Mammary epithelial cell (primary cell): ENCODE measurements at regions of chr9 and their contacts with region 1.

Region 1: GRCh38 chr9:69444021-69444420 is 119.0 kb downstream of the ENTREP1 start:
- DNase-seq: peak; percentile 23
- H3K4me3 ChIP-seq: no peak overlapping the region
- H3K27ac ChIP-seq: no peak overlapping the region
- H3K4me1 ChIP-seq: no peaks in the 10 kb centered on the region
- H3K27me3 ChIP-seq: no peaks in the 10 kb centered on the region
- CTCF ChIP-seq: no peak

Region 2: DNA sequence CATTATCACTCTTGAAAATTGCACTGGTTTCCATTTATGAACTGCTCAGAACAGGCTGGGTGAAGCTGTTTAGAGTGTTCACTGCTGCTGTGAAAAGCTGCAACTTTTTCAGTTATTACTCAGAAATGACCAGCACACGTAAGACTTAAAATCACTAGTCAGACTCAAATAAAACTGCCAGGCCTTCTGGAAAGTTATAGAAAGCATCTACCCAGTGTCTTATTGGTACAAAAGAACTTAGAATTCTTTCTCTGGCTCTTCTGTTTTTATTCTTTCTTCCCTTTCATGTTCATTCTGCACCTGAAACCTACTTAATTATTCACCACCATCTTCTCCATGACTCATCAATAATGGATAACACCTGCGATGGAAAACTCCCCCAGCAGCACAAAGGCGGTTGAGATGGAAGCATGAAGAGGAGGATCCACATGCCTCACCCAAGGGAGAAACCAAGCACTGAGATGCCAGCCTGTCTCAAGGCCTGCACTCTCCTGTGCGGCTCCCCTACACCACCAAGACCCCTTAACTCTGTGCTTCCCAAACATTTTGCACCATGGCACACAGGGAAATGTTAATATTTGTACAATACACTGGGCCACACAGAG is 52.9 kb after region 1 on chr9:
- CTCF ChIA-PET with region 1: no interaction called
- dilution Hi-C with region 1: loop called (anchors 10 kb)
- in situ Hi-C with region 1: no loop called
- intact Hi-C with region 1: no loop called
- DNase-seq: no peak
- H3K4me3 ChIP-seq: no peak overlapping the region
- H3K27ac ChIP-seq: no peak overlapping the region
- H3K4me1 ChIP-seq: no peaks in the 10 kb centered on the region
- H3K27me3 ChIP-seq: no peaks in the 10 kb centered on the region
- CTCF ChIP-seq: no peak

Region 3: DNA sequence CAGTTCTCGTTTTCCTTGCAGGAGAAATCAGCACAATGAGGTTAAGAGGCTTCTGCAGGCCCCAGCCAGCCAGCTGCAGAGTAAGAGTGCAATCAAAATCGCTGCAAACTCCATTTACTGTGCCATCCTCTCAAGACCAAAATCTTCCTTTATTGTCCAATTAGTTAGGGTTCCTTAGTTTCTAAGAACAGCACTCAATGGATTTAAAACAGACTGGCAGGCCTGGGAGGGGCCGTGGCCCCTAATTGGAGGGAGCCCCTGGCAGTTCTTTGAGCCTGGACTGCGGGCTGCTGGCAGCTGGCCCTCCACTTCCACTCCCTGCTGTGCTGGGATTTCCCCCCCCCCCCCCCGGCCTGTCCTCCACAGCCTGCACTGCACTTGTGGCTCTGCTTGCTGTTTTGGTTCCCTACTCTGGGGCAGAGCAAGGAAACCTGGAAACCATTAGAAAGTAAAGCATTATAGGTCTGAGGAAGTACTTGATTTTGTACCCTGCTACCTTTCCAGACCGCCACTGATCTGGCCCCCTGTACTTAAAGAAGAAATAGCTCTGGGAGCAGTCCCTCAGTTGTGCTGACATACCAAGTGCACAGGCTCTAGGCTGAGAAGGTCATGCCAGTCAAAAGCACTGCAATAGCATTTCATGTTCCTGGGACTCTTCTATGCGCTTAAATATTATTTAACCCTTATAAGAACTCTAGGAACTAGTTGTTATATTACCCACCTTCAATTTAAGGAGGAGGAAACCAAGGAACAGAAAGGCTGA is 99.1 kb after region 1 on chr9:
- CTCF ChIA-PET with region 1: no interaction called
- dilution Hi-C with region 1: no loop called
- in situ Hi-C with region 1: no loop called
- intact Hi-C with region 1: no loop called
- DNase-seq: no peak
- H3K4me3 ChIP-seq: no peak overlapping the region
- H3K27ac ChIP-seq: no peak overlapping the region
- H3K4me1 ChIP-seq: no peaks in the 10 kb centered on the region
- H3K27me3 ChIP-seq: peaks cover 8% of the 10 kb centered on the region
- CTCF ChIP-seq: no peak